A549 (cell line): ENCODE measurements at regions of chr17 and their contacts with region 1.

Region 1: GRCh38 chr17:47286198-47286914 is 32.7 kb downstream of the ITGB3 start:
- DNase-seq: no peak
- ATAC-seq: no peak
- H3K4me3 ChIP-seq: no peak overlapping the region
- H3K27ac ChIP-seq: no peak overlapping the region
- H3K4me1 ChIP-seq: peaks cover 8% of the 10 kb centered on the region; the same call in 2 of the 3 replicates
- CTCF ChIP-seq: no peak
- EP300 ChIP-seq: no peak
- POLR2A ChIP-seq: no peak
- RAD21 ChIP-seq: no peak

Region 2: DNA sequence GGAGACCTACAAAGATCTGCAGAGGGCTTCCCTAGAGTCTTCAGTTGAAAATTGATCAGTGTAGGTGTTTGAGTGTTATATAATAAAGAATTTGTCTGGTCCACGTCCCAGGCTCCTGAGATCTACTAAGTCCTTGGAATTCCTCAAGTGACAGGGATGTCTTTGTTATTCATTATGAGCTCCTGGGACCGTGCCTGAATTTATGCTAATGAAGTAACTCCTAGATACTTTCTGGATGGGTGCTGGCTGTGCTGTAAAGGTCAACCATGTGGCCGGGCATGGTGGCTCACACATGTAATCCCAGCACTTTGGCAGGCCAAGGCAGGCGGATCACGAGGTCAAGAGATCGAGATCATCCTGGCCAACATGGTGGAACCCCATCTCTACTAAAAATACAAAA is 141.0 kb before region 1 on chr17:
- CTCF ChIA-PET with region 1: no interaction called
- POLR2A ChIA-PET with region 1: no interaction called
- DNase-seq: no peak
- ATAC-seq: no peak
- H3K4me3 ChIP-seq: no peak overlapping the region
- H3K27ac ChIP-seq: no peak overlapping the region
- H3K4me1 ChIP-seq: no peaks in the 10 kb centered on the region
- CTCF ChIP-seq: no peak
- EP300 ChIP-seq: no peak
- POLR2A ChIP-seq: no peak
- RAD21 ChIP-seq: no peak

Region 3: DNA sequence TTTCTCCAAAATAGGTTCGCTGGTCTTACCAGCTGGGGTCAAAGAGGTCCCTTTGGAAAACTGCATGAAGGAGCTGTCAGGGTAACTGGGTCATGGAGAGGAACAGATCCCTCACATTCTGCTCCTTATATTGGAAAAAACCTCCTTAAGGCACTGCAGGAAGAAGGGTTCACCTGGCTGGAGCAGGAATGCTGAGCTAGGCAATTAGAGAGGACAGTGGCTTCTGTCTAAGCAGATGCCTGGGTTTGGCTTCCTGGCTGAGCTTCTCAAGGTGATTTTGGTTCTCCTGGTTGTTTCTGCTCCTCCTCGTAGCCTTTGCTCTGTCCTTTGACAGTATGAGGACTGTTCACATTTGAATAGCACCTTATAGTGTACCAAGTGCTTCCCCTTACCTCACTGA is 13.1 kb before region 1 on chr17:
- CTCF ChIA-PET with region 1: interaction called, 3 read pairs
- POLR2A ChIA-PET with region 1: interaction called, 14 read pairs
- DNase-seq: no peak
- ATAC-seq: no peak
- H3K4me3 ChIP-seq: no peak overlapping the region
- H3K27ac ChIP-seq: no peak overlapping the region
- H3K4me1 ChIP-seq: peaks cover 8% of the 10 kb centered on the region; the same call in 2 of the 3 replicates
- CTCF ChIP-seq: no peak
- EP300 ChIP-seq: no peak
- POLR2A ChIP-seq: no peak
- RAD21 ChIP-seq: no peak